HAP-1 (cell line): ENCODE measurements at regions of chr2 and their contacts with region 1.

Region 1: GRCh38 chr2:10141736-10142642 is 19.4 kb downstream of the RRM2 start:
- DNase-seq: peak in 1 of 2 experiments; percentile 65
- H3K4me3 ChIP-seq: no peak overlapping the region
- H3K4me1 ChIP-seq: no peaks in the 10 kb centered on the region
- H3K27me3 ChIP-seq: no peaks in the 10 kb centered on the region

Region 2: GRCh38 chr2:10412384-10412783 is 270.4 kb after region 1 on chr2:
- in situ Hi-C with region 1: loop called (anchors 10 kb)
- DNase-seq: peak; percentile 30 to 65
- H3K4me3 ChIP-seq: no peak overlapping the region
- H3K4me1 ChIP-seq: no peaks in the 10 kb centered on the region
- H3K27me3 ChIP-seq: no peaks in the 10 kb centered on the region